A549 (cell line): ENCODE measurements at regions of chr17 and their contacts with region 1.

Region 1: DNA sequence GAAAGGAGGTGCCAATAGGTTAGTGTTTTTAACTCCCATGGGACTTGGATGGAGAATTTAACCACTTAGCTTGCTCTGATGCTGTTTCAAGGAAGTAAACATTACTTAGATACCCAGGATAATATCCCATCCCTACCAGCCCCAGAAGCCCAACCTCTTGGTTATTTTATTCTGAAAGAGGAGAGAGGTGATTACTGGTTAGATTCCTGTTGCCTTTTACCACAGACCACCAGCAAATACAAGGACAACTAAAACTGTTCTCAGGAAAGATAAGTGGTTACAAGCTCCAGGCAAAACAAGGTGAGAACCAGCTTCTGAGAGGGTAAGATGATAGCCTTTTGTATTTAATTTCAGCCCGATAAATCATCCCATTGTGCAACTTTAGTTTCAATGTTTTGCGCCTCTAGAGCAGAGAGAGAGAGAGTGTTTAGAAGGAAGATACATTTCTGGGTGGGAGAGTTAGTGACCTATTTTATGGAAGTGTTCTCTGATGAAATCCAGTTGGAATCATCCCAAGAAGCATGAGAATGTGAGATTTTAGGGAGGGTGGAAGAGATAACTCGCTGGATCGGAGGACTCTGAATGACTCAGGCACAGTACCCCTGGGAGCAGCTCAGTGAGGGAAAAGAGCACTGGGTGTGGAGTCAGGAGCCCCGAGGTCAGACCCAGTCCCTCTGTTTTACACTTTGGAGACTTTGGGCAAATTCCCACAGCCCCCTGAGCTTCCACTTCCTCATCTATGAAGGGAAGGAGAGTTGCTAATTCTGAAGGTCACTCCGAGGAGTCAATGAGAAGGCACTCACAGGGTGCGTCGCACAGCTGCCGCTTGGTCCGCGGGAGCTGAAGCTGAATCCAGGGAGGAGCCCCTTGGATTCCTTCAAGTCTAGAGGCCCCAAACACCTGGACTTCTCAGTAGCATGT is 12.1 kb downstream of the GLP2R start:
- DNase-seq: peak; percentile 90 to 98
- ATAC-seq: peak; percentile 60 to 78
- H3K4me3 ChIP-seq: peak overlapping the region; percentile 1; the same call in 1 of the 3 replicates
- H3K27ac ChIP-seq: peak overlapping the region; percentile 96 to 97
- H3K4me1 ChIP-seq: peaks cover 73% of the 10 kb centered on the region
- CTCF ChIP-seq: no peak
- EP300 ChIP-seq: peak; percentile 99
- POLR2A ChIP-seq: no peak
- RAD21 ChIP-seq: peak; percentile 32 to 73; a peak in 3 of 5 replicates

Region 2: DNA sequence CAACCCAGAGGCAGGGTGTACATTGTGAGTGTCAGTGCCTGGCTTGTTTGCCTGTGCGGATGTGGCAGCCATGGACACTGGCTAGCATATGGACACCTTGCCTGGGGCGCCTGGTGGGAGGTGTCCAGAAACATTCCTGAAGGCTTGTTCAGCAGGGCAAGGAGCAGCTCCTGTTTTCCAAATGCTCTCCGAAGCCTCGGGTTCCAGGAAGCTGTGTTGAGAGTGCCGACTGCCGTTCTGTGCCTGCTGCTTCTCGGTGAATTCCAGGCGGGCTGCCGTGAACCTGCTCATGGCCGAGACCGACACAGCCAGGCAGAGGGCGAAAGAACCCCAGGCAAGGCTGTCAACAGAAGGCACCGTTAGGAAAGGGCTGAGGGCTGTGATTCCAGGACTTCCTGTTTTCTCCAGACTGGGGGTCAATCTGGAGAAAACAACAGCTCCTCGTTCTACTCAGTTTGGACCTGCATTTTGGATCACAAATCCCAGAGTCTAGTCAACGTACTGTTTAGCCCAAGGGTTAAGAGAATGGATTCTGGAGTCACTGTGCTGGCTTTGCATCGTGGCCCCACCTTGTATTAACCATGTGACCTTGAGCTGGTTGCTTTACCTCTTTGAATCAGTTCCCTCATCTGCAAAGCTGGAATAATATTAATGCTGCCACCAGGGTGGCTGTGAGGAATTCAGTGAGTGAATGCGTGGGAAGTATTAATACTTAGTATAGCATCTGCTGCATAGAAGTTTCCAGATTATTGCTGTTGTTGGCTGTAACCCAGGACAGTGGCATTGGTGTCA is 35.3 kb before region 1 on chr17:
- CTCF ChIA-PET with region 1: interaction called, 12 read pairs
- POLR2A ChIA-PET with region 1: interaction called, 11 read pairs
- DNase-seq: peak; percentile 70 to 90
- ATAC-seq: peak; percentile 89 to 92
- H3K4me3 ChIP-seq: peak overlapping the region; percentile 10; the same call in 1 of the 3 replicates
- H3K27ac ChIP-seq: peak overlapping the region; percentile 89 to 90
- H3K4me1 ChIP-seq: peaks cover 15% of the 10 kb centered on the region
- CTCF ChIP-seq: peak; percentile 18; the same call in 1 of the 3 replicates
- EP300 ChIP-seq: no peak
- POLR2A ChIP-seq: no peak
- RAD21 ChIP-seq: peak; percentile 35 to 48; a peak in 4 of 5 replicates

Region 3: DNA sequence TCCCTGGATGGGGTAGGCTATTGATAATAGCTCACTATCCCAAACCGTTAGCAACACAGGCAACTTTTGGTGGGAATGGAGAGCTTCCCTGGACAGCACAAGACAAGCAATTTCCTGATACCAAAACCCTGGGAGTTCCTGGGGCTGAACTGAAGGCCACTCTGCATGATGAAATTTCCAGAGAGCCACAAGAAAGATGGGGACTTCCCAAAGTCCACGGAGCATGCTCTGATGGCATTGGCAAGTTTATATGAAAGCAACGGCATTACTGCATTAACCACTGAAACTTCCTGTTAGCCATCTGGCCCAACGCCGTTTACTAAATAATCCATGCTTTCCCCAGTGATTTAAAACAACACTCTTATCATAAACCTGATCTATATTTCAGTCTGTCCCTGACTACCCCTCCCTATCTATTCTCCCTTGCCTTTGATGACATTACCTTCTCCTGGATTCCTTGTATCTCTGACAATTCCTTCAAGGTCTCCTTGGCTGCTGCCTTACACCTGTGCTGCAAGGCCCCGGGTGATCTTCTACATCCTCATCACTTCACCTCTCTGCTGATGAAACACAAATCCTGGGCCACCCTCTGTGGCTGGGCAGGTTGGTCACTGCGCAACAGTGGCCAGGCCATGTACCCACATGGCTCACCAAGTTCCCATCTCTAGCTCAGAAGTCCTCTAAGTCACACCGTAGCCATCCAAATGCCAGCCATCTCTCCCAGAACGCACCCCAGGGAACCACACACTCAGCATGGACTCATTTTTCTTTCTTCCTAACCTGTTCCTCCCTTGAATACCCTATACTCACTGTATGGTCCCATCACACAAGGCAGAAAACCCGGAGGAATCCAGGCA is 175.8 kb after region 1 on chr17:
- CTCF ChIA-PET with region 1: no interaction called
- POLR2A ChIA-PET with region 1: no interaction called
- DNase-seq: no peak
- ATAC-seq: 0 out of 6 replicates have a peak, but pooled peaks of 1 of the 2 experiments have one; percentile 43
- H3K4me3 ChIP-seq: no peak overlapping the region
- H3K27ac ChIP-seq: no peak overlapping the region
- H3K4me1 ChIP-seq: no peaks in the 10 kb centered on the region
- CTCF ChIP-seq: no peak
- EP300 ChIP-seq: no peak
- POLR2A ChIP-seq: no peak
- RAD21 ChIP-seq: no peak